Activated naive CD4-positive, alpha-beta T cell treated with anti-CD3 and anti-CD28 coated beads for 36 hours (primary cell): ENCODE measurements at regions of chr9 and their contacts with region 1.

Region 1: GRCh38 chr9:128067876-128068613 is at the start of gene SLC25A25:
- DNase-seq: peak; percentile 100
- H3K4me3 Mint-ChIP-seq: no peak within 1 kb of the TSS
- H3K27ac Mint-ChIP-seq: peak within 1 kb of the TSS; percentile 86
- H3K4me1 Mint-ChIP-seq: peaks cover 56% of the 10 kb centered on the region
- H3K27me3 Mint-ChIP-seq: no peaks in the 10 kb centered on the region
- total RNA-seq, gene SLC25A25: 12.0 to 12.7 TPM

Region 2: GRCh38 chr9:127754099-127755050 is 313.7 kb before region 1 on chr9:
- CTCF ChIA-PET with region 1: no interaction called
- intact Hi-C with region 1: no loop called
- DNase-seq: no peak
- H3K4me3 Mint-ChIP-seq: no peak overlapping the region
- H3K27ac Mint-ChIP-seq: no peak overlapping the region
- H3K4me1 Mint-ChIP-seq: no peaks in the 10 kb centered on the region
- H3K27me3 Mint-ChIP-seq: no peaks in the 10 kb centered on the region

Region 3: DNA sequence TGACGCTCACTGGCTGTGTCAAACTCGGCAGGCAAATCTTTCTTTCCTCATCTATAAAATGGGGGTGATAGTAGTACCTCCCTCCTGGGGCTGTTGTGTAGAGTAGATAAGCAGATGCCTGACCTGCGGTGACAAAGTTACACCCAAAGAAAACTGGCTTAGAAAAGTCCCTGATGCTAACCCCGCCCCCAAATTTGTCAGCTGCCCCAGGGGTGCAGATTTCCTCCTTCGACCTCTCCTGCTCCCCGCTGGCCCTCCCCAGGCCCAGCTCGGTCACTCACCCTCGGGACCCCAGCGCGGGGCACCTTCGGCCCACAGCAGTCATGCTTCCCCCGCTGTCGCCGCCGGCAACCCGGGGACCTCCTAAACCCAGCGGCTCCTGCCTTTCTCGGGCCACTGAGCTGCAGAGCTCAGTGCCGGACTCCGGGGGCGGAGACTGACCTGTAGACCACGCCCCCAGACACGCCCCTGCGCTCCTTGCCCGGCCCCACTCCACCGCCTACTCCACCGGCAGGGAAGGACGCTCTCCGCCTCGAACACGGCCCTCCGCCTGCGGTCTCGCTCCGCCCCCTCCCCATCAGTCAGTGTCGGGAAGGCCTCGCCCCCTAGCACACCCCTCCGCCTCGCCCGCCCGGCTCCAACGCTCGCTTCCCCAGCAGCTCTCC is 297.0 kb before region 1 on chr9:
- CTCF ChIA-PET with region 1: no interaction called
- intact Hi-C with region 1: loop called (anchors 1 kb)
- DNase-seq: peak; percentile 99
- H3K4me3 Mint-ChIP-seq: peak overlapping the region; percentile 90
- H3K27ac Mint-ChIP-seq: peak overlapping the region; percentile 91
- H3K4me1 Mint-ChIP-seq: peaks cover 62% of the 10 kb centered on the region
- H3K27me3 Mint-ChIP-seq: no peaks in the 10 kb centered on the region

Region 4: DNA sequence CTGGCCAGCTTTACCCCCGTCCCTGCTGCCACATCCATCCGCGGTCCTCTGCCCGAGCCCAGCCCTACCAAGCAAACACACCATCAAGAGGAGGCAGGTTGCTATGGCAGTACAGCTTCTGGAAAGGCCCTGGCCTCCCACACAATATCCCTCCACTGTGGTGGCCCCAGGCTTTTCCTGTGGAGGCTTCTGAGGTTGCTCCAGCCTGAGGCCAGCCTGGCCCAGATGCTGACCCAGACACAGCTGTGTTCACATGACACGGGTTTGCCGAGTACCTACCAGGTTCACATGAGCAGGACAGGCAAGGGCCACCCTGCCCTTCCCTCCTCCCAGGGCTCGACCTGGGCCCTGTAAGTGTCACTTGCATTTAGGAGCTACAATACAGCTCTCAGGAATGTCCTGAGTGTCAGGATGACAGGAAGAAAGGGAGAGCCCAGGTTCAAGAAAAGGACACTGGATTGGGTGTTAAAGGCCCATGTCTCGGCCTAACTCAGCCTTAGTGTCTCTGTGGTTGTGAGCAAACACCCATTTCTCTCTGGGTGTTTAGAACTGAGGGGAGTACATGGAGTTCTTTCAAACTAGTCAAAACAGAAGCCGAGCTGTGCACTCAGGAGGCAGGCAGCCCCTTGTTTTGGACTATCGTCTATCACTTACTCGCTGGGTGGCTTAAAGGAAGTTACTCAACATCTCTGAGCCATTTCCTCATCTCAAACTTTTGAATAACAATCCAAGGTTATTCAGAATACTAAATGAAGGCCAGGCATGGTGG is 41.1 kb before region 1 on chr9:
- CTCF ChIA-PET with region 1: no interaction called
- intact Hi-C with region 1: loop called (anchors 1 kb)
- DNase-seq: peak; percentile 80
- H3K4me3 Mint-ChIP-seq: peak overlapping the region; percentile 80
- H3K27ac Mint-ChIP-seq: peak overlapping the region; percentile 98
- H3K4me1 Mint-ChIP-seq: peaks cover 90% of the 10 kb centered on the region
- H3K27me3 Mint-ChIP-seq: no peaks in the 10 kb centered on the region

Region 5: GRCh38 chr9:128159784-128160602 is 91.9 kb after region 1 on chr9 and contains the start of gene BBLN:
- CTCF ChIA-PET with region 1: no interaction called
- intact Hi-C with region 1: loop called (anchors 1 kb)
- DNase-seq: peak; percentile 96
- H3K4me3 Mint-ChIP-seq: peak within 1 kb of the TSS; percentile 77
- H3K27ac Mint-ChIP-seq: peak within 1 kb of the TSS; percentile 85
- H3K4me1 Mint-ChIP-seq: peaks cover 16% of the 10 kb centered on the region
- H3K27me3 Mint-ChIP-seq: no peaks in the 10 kb centered on the region
- total RNA-seq, gene BBLN: 73.3 to 77.7 TPM